ENCODE measurements at regions of chr6 and their contacts with region 1.

Region 1: GRCh38 chr6:42782622-42783176 is 847 bp downstream of the BICRAL start:
- DNase-seq: peak; percentile 66
- H3K4me3 ChIP-seq: peak overlapping the region; percentile 95 to 97
- H3K27ac ChIP-seq: peak overlapping the region; percentile 98 to 100
- H3K4me1 ChIP-seq: peaks cover 25% of the 10 kb centered on the region
- H3K27me3 ChIP-seq: no peaks in the 10 kb centered on the region
- CTCF ChIP-seq: no peak
- POLR2A ChIP-seq: no peak

Region 2: DNA sequence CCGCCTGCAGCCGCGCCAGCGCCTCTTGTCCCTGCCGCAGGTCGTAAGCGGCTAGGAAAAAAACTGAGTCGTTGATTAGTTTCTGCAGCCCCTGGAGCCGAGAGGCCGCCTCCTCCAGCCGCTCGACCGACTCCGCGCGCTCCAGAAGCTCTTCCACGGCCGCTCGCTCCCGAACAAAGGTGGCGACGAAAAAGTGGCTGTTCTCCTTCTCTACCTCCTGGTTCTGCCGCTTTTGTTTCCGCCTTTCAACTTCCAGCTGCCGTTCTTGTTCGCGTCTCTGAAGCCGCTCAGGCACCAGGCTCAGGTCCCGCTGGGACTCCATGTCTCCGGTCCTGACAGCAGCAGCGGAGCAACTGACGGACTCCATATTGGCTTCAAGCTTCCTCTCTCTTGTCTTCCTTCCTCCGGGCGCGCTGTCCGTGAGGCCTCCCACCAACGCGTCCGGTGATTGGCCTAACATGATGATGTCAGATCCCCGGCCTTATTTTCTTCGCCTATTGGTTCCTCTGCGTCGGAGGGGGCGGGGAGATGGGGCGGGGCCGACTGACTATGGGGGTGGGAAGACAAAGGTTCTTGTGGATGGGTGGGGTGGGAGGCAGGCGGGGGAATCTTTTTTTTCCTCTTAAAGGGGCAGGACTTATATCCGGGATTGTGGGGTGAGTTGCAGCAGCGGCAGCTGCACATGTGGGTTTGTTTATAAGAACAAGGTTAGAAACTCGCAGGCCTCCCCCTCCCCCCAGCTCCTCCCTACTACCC is 36.8 kb before region 1 on chr6 and contains the start of gene TBCC:
- intact Hi-C with region 1: loop called (anchors 5 kb)
- DNase-seq: peak; percentile 99
- H3K4me3 ChIP-seq: peak within 1 kb of the TSS; percentile 98 to 99
- H3K27ac ChIP-seq: peak within 1 kb of the TSS; percentile 93 to 94
- H3K4me1 ChIP-seq: peaks cover 23% of the 10 kb centered on the region
- H3K27me3 ChIP-seq: no peaks in the 10 kb centered on the region
- CTCF ChIP-seq: no peak
- POLR2A ChIP-seq: peak; percentile 74
- total RNA-seq, gene TBCC: 40.2 to 52.1 TPM

Measured in testis (tissue), 5 donors.